PC-9 (cell line): ENCODE measurements at regions of chr2 and their contacts with region 1.

Region 1: GRCh38 chr2:207258263-207258991 is 92.7 kb upstream of the KLF7 start:
- DNase-seq: peak; percentile 75 to 81
- H3K4me3 ChIP-seq: no peak overlapping the region
- H3K27ac ChIP-seq: no peak overlapping the region
- H3K4me1 ChIP-seq: peaks cover 39% of the 10 kb centered on the region
- H3K27me3 ChIP-seq: no peaks in the 10 kb centered on the region
- CTCF ChIP-seq: no peak

Region 2: GRCh38 chr2:207288628-207289027 is 30.2 kb after region 1 on chr2:
- CTCF ChIA-PET with region 1: no interaction called
- POLR2A ChIA-PET with region 1: no interaction called
- intact Hi-C with region 1: loop called (anchors 1 kb)
- DNase-seq: no peak
- H3K4me3 ChIP-seq: no peak overlapping the region
- H3K27ac ChIP-seq: no peak overlapping the region
- H3K4me1 ChIP-seq: peaks cover 16% of the 10 kb centered on the region
- H3K27me3 ChIP-seq: no peaks in the 10 kb centered on the region
- CTCF ChIP-seq: no peak

Region 3: DNA sequence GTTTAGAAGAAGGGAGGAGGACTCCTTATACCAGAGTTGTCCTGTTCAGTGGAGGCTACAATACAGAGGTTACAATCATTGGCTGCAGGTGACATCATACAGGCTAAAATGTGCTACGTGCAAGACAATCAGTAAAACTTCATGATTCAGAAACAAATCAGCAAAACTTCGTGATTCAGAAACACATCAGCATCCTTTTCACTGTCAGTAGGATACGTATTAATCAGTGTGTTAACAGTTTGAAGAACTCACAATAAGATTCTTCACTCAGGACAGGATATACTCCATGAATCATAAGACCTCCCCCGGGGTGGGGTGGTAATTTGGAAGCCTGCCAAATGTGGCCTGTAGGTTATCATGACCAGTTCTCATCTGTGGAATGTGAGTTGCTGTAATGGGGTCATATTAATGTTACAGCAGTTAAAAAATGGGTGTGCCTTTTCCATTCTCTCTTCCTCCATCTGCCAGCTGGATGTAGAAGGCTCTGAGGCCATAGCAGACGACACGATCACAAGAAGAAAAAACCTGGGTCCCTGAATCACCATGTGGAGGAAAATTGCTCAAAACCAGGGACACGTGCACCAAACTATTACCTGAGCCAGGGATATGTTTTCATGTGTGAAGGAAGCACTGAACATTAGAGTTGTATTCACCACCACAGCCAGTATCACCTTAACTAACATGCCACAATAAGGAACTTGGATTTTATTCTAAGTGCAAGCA is 136.5 kb after region 1 on chr2:
- CTCF ChIA-PET with region 1: no interaction called
- POLR2A ChIA-PET with region 1: no interaction called
- intact Hi-C with region 1: loop called (anchors 1 kb)
- DNase-seq: peak; percentile 79 to 96
- H3K4me3 ChIP-seq: peak overlapping the region; percentile 40; the same call in 1 of the 2 replicates
- H3K27ac ChIP-seq: peak overlapping the region; percentile 99
- H3K4me1 ChIP-seq: peaks cover 37% of the 10 kb centered on the region
- H3K27me3 ChIP-seq: no peaks in the 10 kb centered on the region
- CTCF ChIP-seq: no peak

Region 4: GRCh38 chr2:207473049-207473930 is 214.9 kb after region 1 on chr2:
- CTCF ChIA-PET with region 1: no interaction called
- POLR2A ChIA-PET with region 1: interaction called, 5 read pairs
- intact Hi-C with region 1: loop called (anchors 2 kb)
- DNase-seq: peak; percentile 40 to 46
- H3K4me3 ChIP-seq: no peak overlapping the region
- H3K27ac ChIP-seq: no peak overlapping the region
- H3K4me1 ChIP-seq: peaks cover 18% of the 10 kb centered on the region
- H3K27me3 ChIP-seq: no peaks in the 10 kb centered on the region
- CTCF ChIP-seq: peak; percentile 64